Activated CD8-positive, alpha-beta T cell treated with anti-CD3 and anti-CD28 coated beads for 36 hours (primary cell): ENCODE measurements at regions of chr1 and their contacts with region 1.

Region 1: GRCh38 chr1:151156515-151156819 is at the start of gene TNFAIP8L2:
- DNase-seq: peak; percentile 93
- ATAC-seq: peak; percentile 82
- H3K4me3 Mint-ChIP-seq: peak within 1 kb of the TSS; percentile 97
- H3K27ac Mint-ChIP-seq: peak within 1 kb of the TSS; percentile 98
- H3K4me1 Mint-ChIP-seq: peaks cover 41% of the 10 kb centered on the region
- H3K27me3 Mint-ChIP-seq: no peaks in the 10 kb centered on the region
- CTCF ChIP-seq: no peak
- total RNA-seq, gene TNFAIP8L2: 16.1 to 17.5 TPM

Region 2: GRCh38 chr1:150981696-150982386 is 174.6 kb before region 1 on chr1 and contains the start of gene ANXA9:
- CTCF ChIA-PET with region 1: no interaction called
- POLR2A ChIA-PET with region 1: no interaction called
- intact Hi-C with region 1: no loop called
- DNase-seq: peak; percentile 28
- ATAC-seq: peak; percentile 12
- H3K4me3 Mint-ChIP-seq: no peak within 1 kb of the TSS
- H3K27ac Mint-ChIP-seq: no peak within 1 kb of the TSS
- H3K4me1 Mint-ChIP-seq: peaks cover 21% of the 10 kb centered on the region
- H3K27me3 Mint-ChIP-seq: no peaks in the 10 kb centered on the region
- CTCF ChIP-seq: no peak
- total RNA-seq, gene ANXA9: 0.25 TPM in 1 of 2 experiments, not detected in the other

Region 3: GRCh38 chr1:151008190-151008860 is 148.1 kb before region 1 on chr1 and contains the start of gene PRUNE1:
- CTCF ChIA-PET with region 1: interaction called, 5 read pairs
- POLR2A ChIA-PET with region 1: interaction called, 3 read pairs
- intact Hi-C with region 1: loop called (anchors 5 kb)
- DNase-seq: peak; percentile 98
- ATAC-seq: peak; percentile 90
- H3K4me3 Mint-ChIP-seq: peak within 1 kb of the TSS; percentile 98
- H3K27ac Mint-ChIP-seq: peak within 1 kb of the TSS; percentile 98
- H3K4me1 Mint-ChIP-seq: peaks cover 72% of the 10 kb centered on the region
- H3K27me3 Mint-ChIP-seq: no peaks in the 10 kb centered on the region
- CTCF ChIP-seq: no peak
- total RNA-seq, gene PRUNE1: 12.4 to 15.7 TPM

Region 4: GRCh38 chr1:151070474-151071276 is 85.8 kb before region 1 on chr1 and contains the start of gene GABPB2:
- CTCF ChIA-PET with region 1: interaction called, 12 read pairs
- POLR2A ChIA-PET with region 1: interaction called, 14 read pairs
- intact Hi-C with region 1: no loop called
- DNase-seq: peak; percentile 90
- ATAC-seq: peak; percentile 87
- H3K4me3 Mint-ChIP-seq: peak within 1 kb of the TSS; percentile 99
- H3K27ac Mint-ChIP-seq: peak within 1 kb of the TSS; percentile 100
- H3K4me1 Mint-ChIP-seq: peaks cover 17% of the 10 kb centered on the region
- H3K27me3 Mint-ChIP-seq: no peaks in the 10 kb centered on the region
- CTCF ChIP-seq: peak; percentile 90
- total RNA-seq, gene GABPB2: 17.5 to 19.3 TPM

Region 5: GRCh38 chr1:151130987-151131586 is 25.4 kb before region 1 on chr1:
- CTCF ChIA-PET with region 1: interaction called, 22 read pairs
- POLR2A ChIA-PET with region 1: interaction called, 14 read pairs
- intact Hi-C with region 1: no loop called
- DNase-seq: peak; percentile 96
- ATAC-seq: peak; percentile 100
- H3K4me3 Mint-ChIP-seq: peak overlapping the region; percentile 69
- H3K27ac Mint-ChIP-seq: peak overlapping the region; percentile 75
- H3K4me1 Mint-ChIP-seq: peaks cover 12% of the 10 kb centered on the region
- H3K27me3 Mint-ChIP-seq: no peaks in the 10 kb centered on the region
- CTCF ChIP-seq: no peak

Region 6: GRCh38 chr1:151254217-151255213 is 98.0 kb after region 1 on chr1 and contains the start of gene PSMD4:
- CTCF ChIA-PET with region 1: interaction called, 15 read pairs
- POLR2A ChIA-PET with region 1: interaction called, 4 read pairs
- intact Hi-C with region 1: no loop called
- DNase-seq: peak; percentile 96
- ATAC-seq: peak; percentile 94
- H3K4me3 Mint-ChIP-seq: peak within 1 kb of the TSS; percentile 83
- H3K27ac Mint-ChIP-seq: peak within 1 kb of the TSS; percentile 88
- H3K4me1 Mint-ChIP-seq: peaks cover 27% of the 10 kb centered on the region
- H3K27me3 Mint-ChIP-seq: no peaks in the 10 kb centered on the region
- CTCF ChIP-seq: no peak
- total RNA-seq, gene PSMD4: 203 to 214 TPM